ENCODE measurements at regions of chr7 and their contacts with region 1.

Region 1: GRCh38 chr7:134619627-134620331 is 26.9 kb upstream of the BPGM start:
- DNase-seq: peak; percentile 97
- H3K4me3 ChIP-seq: no peak overlapping the region
- H3K27ac ChIP-seq: peak overlapping the region; percentile 99
- H3K4me1 ChIP-seq: peaks cover 43% of the 10 kb centered on the region
- H3K27me3 ChIP-seq: no peaks in the 10 kb centered on the region
- CTCF ChIP-seq: no peak

Region 2: GRCh38 chr7:134491963-134492362 is 127.8 kb before region 1 on chr7:
- CTCF ChIA-PET with region 1: no interaction called
- dilution Hi-C with region 1: no loop called
- in situ Hi-C with region 1: no loop called
- intact Hi-C with region 1: no loop called
- DNase-seq: no peak
- H3K4me3 ChIP-seq: no peak overlapping the region
- H3K27ac ChIP-seq: no peak overlapping the region
- H3K4me1 ChIP-seq: no peaks in the 10 kb centered on the region
- H3K27me3 ChIP-seq: no peaks in the 10 kb centered on the region
- CTCF ChIP-seq: no peak

Region 3: DNA sequence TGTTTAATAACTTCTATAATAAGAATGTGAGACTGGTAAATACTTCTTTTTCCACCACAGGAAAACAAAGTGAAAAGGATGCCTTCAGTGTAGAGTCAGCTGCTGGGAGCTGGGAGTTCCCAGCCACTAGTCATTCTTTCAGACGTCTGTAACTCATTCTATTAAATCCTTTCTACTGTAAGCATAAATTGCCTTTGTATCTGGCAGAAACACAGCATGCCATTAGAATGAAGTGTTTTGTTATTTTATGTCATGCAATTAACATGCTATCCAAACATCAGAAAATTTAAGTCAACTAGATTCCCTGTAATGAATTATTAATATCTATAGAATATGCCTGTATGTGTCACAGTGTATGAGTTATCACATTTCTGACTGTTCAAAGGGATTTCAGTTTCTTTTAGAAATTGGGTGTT is 41.2 kb after region 1 on chr7:
- CTCF ChIA-PET with region 1: no interaction called
- dilution Hi-C with region 1: no loop called
- in situ Hi-C with region 1: no loop called
- intact Hi-C with region 1: loop called (anchors 2 kb)
- DNase-seq: peak; percentile 83
- H3K4me3 ChIP-seq: no peak overlapping the region
- H3K27ac ChIP-seq: peak overlapping the region; percentile 8
- H3K4me1 ChIP-seq: peaks cover 14% of the 10 kb centered on the region
- H3K27me3 ChIP-seq: no peaks in the 10 kb centered on the region
- CTCF ChIP-seq: no peak

Measured in mammary epithelial cell (primary cell).